ENCODE measurements at regions of chr6 and their contacts with region 1.

Region 1: GRCh38 chr6:90472744-90473143 is 114.1 kb downstream of the MAP3K7 start:
- DNase-seq: peak; percentile 52
- H3K4me3 Mint-ChIP-seq: peak overlapping the region; percentile 68
- H3K27ac Mint-ChIP-seq: peak overlapping the region; percentile 92
- H3K4me1 Mint-ChIP-seq: peaks cover 100% of the 10 kb centered on the region
- H3K27me3 Mint-ChIP-seq: no peaks in the 10 kb centered on the region

Region 2: DNA sequence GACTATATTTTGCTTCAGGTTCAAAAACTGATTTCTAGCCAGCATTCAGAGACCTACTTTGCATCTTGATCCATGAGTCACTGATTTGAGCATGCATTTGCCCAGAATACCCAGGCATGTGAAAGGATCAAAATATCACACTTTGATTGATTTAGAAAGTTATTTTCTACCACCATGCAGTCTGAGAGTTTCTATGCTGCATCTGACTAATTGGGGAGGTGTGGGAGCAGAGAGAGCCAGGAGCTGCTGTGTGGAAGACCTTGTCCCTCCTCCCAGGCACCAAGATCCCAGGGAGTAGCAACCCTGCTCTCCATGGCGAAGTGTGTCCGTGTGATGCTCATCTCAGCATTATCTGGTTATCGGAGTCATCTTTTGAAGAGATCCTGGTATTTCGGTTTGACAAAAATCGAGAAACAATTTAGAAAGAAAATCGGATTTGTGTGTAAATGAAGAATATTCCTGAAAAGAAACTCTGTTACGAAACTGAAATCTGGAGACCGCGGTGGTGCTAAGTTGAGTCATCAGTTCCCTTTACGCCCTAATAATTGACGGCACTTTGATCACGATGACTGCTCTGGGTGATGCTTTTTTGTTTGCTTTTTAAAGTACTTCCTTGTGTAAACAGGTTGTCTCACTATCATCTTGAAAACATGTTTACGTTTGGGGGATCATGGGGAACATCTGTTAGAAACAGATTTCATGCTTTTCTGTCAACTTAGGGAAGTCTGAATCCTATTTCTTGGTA is 369.5 kb before region 1 on chr6:
- intact Hi-C with region 1: loop called (anchors 1 kb)
- DNase-seq: no peak
- H3K4me3 Mint-ChIP-seq: peak overlapping the region; percentile 79
- H3K27ac Mint-ChIP-seq: peak overlapping the region; percentile 88
- H3K4me1 Mint-ChIP-seq: peaks cover 70% of the 10 kb centered on the region
- H3K27me3 Mint-ChIP-seq: no peaks in the 10 kb centered on the region

Region 3: GRCh38 chr6:90406142-90406794 is 66.5 kb before region 1 on chr6:
- intact Hi-C with region 1: loop called (anchors 1 kb)
- DNase-seq: peak; percentile 26
- H3K4me3 Mint-ChIP-seq: peak overlapping the region; percentile 3
- H3K27ac Mint-ChIP-seq: peak overlapping the region; percentile 79
- H3K4me1 Mint-ChIP-seq: peaks cover 73% of the 10 kb centered on the region
- H3K27me3 Mint-ChIP-seq: peaks cover 4% of the 10 kb centered on the region

Region 4: GRCh38 chr6:90425161-90425641 is 47.5 kb before region 1 on chr6:
- intact Hi-C with region 1: loop called (anchors 1 kb)
- DNase-seq: no peak
- H3K4me3 Mint-ChIP-seq: peak overlapping the region; percentile 68
- H3K27ac Mint-ChIP-seq: peak overlapping the region; percentile 87
- H3K4me1 Mint-ChIP-seq: peaks cover 26% of the 10 kb centered on the region
- H3K27me3 Mint-ChIP-seq: no peaks in the 10 kb centered on the region

Region 5: GRCh38 chr6:90458353-90459224 is 14.2 kb before region 1 on chr6:
- intact Hi-C with region 1: loop called (anchors 1 kb)
- DNase-seq: peak; percentile 66
- H3K4me3 Mint-ChIP-seq: peak overlapping the region; percentile 47
- H3K27ac Mint-ChIP-seq: peak overlapping the region; percentile 93
- H3K4me1 Mint-ChIP-seq: peaks cover 65% of the 10 kb centered on the region
- H3K27me3 Mint-ChIP-seq: no peaks in the 10 kb centered on the region

Region 6: DNA sequence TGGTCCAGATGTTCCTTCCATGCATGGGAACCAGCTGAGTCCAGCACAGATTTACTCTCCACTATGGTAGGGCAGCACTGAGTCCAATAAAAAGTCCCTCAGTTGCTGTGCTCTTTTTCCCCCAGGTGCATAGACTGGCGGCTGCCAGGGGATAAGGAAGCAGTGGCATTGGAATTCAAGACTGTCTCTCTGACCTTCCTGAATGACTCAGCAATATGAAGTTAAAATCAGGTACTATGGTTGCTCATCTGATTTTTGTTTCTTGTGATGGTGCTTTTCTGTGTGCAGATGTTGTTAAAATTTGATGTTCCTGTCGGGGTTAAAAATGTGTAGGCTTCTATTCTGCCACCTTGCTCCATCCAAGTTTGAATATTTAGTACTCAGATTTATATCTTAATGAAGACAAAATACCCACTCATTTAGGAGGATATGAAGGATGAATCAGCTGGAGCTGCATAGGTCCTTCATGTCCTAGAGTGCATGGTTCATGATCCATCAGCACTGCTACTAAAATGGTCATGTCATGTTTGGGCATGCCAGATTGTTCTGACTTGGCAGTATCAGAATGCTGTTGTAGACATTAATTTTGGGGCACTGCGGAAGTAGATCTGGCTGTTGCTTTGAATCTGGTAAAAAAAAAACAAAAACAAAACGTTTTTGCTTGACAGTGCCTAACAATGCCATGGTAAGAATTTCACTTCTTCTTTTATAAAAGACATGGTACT is 435.3 kb after region 1 on chr6:
- intact Hi-C with region 1: no loop called
- DNase-seq: no peak
- H3K4me3 Mint-ChIP-seq: no peak overlapping the region
- H3K27ac Mint-ChIP-seq: no peak overlapping the region
- H3K4me1 Mint-ChIP-seq: no peaks in the 10 kb centered on the region
- H3K27me3 Mint-ChIP-seq: peaks cover 14% of the 10 kb centered on the region

Measured in activated T-helper 1 cell treated with anti-CD3 and anti-CD28 coated beads, Interleukin-12 subunit alpha, Interleukin-12 subunit beta, Interleukin-2, Interleukin-4 antibody, amounts not matched to agents 30 ng/mL and 10 ng/mL and 1 ng/mL, durations not matched to agents 14 hours and 24 hours and 36 hours (primary cell).